ENCODE measurements at regions of chr12 and their contacts with region 1.

Region 1: DNA sequence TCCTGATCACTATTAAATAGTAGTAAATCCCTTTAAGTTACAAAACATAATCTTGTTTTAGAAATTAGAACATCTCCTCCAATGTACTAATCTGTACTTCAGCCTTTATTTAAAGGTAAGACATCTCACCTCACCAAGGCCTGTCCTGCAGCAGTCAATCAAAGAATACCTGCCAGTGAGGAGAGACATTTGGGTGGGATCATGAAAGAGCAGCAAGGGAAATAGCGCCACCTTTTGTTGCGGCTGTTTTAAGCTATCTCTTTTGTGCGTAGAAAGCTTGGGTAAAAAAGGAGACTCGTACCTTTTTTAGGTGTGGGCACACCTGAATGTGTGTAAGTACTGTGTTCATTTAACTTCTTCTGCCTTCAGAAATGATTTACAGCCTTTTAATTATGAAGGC is 117.8 kb upstream of the TMTC1 start:
- DNase-seq: peak in 1 of 2 experiments; percentile 74
- H3K4me3 ChIP-seq: no peak overlapping the region
- H3K27ac ChIP-seq: no peak overlapping the region
- H3K4me1 ChIP-seq: no peaks in the 10 kb centered on the region
- H3K27me3 ChIP-seq: no peaks in the 10 kb centered on the region
- CTCF ChIP-seq: peak in 2 of 3 experiments; percentile 68 to 89; a peak in 3 of 4 replicates
- EP300 ChIP-seq: no peak
- POLR2A ChIP-seq: no peak
- RAD21 ChIP-seq: peak; percentile 94 to 95

Region 2: GRCh38 chr12:29552324-29552927 is 349.2 kb before region 1 on chr12:
- CTCF ChIA-PET with region 1: interaction called, 28 read pairs
- POLR2A ChIA-PET with region 1: no interaction called
- DNase-seq: peak; percentile 13 to 83
- H3K4me3 ChIP-seq: no peak overlapping the region
- H3K27ac ChIP-seq: no peak overlapping the region
- H3K4me1 ChIP-seq: no peaks in the 10 kb centered on the region
- H3K27me3 ChIP-seq: no peaks in the 10 kb centered on the region
- CTCF ChIP-seq: peak; percentile 78 to 87 (median 85)
- EP300 ChIP-seq: no peak
- POLR2A ChIP-seq: no peak
- RAD21 ChIP-seq: peak; percentile 91 to 92

Region 3: DNA sequence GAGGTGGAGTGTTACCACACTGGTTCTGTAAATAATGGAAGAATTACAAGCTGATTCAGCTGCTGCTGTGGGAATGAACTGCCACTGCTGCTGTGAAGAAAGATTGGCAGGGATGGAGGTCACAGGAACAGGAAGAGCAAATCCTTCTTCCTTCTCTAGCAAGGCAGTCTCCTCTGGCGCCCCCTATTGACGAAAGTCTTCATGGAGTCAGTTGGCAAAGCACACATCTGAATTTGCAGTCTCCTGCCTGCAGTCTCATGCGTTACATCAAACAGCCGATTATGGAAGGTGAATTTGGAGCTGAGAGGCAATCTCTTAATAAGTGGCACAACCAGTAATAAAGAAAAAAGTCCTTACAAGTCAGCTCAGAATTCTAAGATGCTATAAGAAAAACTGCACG is 11.8 kb before region 1 on chr12:
- CTCF ChIA-PET with region 1: interaction called, 39 read pairs
- POLR2A ChIA-PET with region 1: no interaction called
- DNase-seq: peak; percentile 44 to 93
- H3K4me3 ChIP-seq: no peak overlapping the region
- H3K27ac ChIP-seq: no peak overlapping the region
- H3K4me1 ChIP-seq: peaks cover 0 to 6% (median 0%) of the 10 kb centered on the region in 4 experiments; a peak in 1 of 7 replicates
- H3K27me3 ChIP-seq: no peaks in the 10 kb centered on the region
- CTCF ChIP-seq: peak; percentile 63 to 94 (median 93)
- EP300 ChIP-seq: 0 out of 3 replicates have a peak, but pooled peaks of 1 of the 2 experiments have one; percentile 42
- POLR2A ChIP-seq: no peak
- RAD21 ChIP-seq: peak; percentile 85 to 86

Region 4: DNA sequence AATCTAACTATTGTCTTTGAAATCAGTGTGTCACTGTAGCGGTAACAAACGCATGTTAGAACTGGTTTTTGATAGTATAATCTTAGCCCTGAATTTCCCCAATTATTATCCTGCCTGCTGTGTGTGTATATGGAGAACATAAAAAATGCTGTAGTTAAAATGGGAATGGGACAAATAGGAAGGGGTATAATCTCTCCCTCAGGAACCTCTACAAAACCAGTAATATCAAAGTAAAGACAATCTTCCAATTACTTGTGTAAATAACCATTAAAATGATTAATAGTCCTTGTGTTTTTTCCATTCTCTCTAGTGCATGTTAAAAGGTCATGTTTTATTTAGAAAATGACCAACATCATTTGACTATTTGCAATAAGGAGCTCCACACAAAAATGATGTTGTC is 82.3 kb after region 1 on chr12:
- CTCF ChIA-PET with region 1: no interaction called
- POLR2A ChIA-PET with region 1: no interaction called
- DNase-seq: no peak
- H3K4me3 ChIP-seq: no peak overlapping the region
- H3K27ac ChIP-seq: no peak overlapping the region
- H3K4me1 ChIP-seq: no peaks in the 10 kb centered on the region
- H3K27me3 ChIP-seq: no peaks in the 10 kb centered on the region
- CTCF ChIP-seq: no peak
- EP300 ChIP-seq: no peak
- POLR2A ChIP-seq: no peak
- RAD21 ChIP-seq: no peak

Measured in H1 (cell line).